ENCODE measurements at regions of chr12 and their contacts with region 1.

Region 1: DNA sequence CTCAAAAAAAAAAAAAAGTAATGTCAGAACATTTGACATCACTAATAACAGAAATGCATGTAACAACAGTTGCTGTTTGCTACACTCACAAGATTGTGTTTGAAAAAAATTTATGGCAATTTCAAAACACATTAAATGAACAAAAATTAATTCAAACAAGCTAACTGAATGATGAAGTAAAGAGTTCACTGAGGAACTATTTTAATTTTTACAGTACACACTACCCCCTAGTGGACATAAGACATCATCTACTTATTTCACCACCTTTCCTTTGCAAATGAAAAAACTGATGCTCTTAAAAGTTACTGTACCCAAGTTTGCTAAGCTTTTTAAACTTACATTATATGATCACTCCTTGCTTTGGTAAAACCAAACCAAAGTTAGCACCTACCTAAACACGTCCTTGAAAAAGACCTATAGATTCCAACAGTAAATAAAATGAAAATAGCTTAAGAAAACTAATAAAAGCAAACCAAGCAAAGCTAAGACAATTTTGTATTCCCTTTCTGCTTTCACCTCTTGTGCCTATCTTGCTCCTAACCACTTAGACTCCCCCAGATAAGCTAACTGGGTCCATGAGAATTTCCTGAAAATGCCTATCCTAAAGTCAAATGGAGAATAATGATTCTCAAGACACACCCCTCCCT is 22.2 kb downstream of the UBE2N start:
- DNase-seq: peak in 3 of 14 experiments; percentile 66 to 73 (median 72)
- ATAC-seq: peak; percentile 74
- H3K4me3 ChIP-seq: no peak overlapping the region
- H3K4me3 Mint-ChIP-seq: peak overlapping the region; percentile 5
- H3K27ac ChIP-seq: no peak overlapping the region
- H3K27ac Mint-ChIP-seq: peak overlapping the region; percentile 31
- H3K4me1 ChIP-seq: peaks cover 21% of the 10 kb centered on the region
- H3K4me1 Mint-ChIP-seq: peaks cover 91% of the 10 kb centered on the region
- H3K27me3 ChIP-seq: no peaks in the 10 kb centered on the region
- H3K27me3 Mint-ChIP-seq: no peaks in the 10 kb centered on the region
- CTCF ChIP-seq: peak; percentile 76

Region 2: DNA sequence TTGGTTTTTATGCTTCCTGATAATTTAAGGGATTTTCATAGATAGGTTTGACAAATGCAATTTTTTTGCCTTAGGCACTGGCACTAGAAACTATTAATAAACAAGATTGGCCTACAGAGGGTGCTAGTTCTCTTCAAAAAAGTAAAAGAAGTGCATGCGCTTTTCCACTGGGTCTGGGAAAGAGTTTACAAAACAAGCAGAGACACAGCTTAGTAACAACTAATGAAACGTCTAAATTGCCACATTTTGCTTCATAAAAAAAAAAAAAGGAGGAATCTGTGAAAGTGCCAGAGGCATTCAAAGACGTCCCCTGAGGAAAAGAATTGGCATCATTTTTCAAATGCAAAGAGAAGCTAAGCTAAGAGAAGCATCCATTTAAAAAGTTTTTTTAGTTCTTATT is 432.1 kb before region 1 on chr12:
- CTCF ChIA-PET with region 1: interaction called, 5 read pairs
- POLR2A ChIA-PET with region 1: no interaction called
- intact Hi-C with region 1: loop called (anchors 1 to 5 kb)
- DNase-seq: peak in 4 of 14 experiments; percentile 13 to 73 (median 70)
- ATAC-seq: peak; percentile 81
- H3K4me3 ChIP-seq: no peak overlapping the region
- H3K4me3 Mint-ChIP-seq: peak overlapping the region; percentile 26
- H3K27ac ChIP-seq: no peak overlapping the region
- H3K27ac Mint-ChIP-seq: no peak overlapping the region
- H3K4me1 ChIP-seq: peaks cover 7% of the 10 kb centered on the region
- H3K4me1 Mint-ChIP-seq: peaks cover 12% of the 10 kb centered on the region
- H3K27me3 ChIP-seq: no peaks in the 10 kb centered on the region
- H3K27me3 Mint-ChIP-seq: no peaks in the 10 kb centered on the region
- CTCF ChIP-seq: peak; percentile 80

Region 3: GRCh38 chr12:93098077-93098476 is 321.4 kb before region 1 on chr12:
- CTCF ChIA-PET with region 1: interaction called, 9 read pairs
- POLR2A ChIA-PET with region 1: no interaction called
- intact Hi-C with region 1: loop called in 1 of 2 experiments (anchors 5 kb)
- DNase-seq: peak; percentile 32 to 81 (median 60)
- ATAC-seq: peak; percentile 84
- H3K4me3 ChIP-seq: no peak overlapping the region
- H3K4me3 Mint-ChIP-seq: no peak overlapping the region
- H3K27ac ChIP-seq: no peak overlapping the region
- H3K27ac Mint-ChIP-seq: no peak overlapping the region
- H3K4me1 ChIP-seq: peaks cover 3% of the 10 kb centered on the region
- H3K4me1 Mint-ChIP-seq: peaks cover 5% of the 10 kb centered on the region
- H3K27me3 ChIP-seq: no peaks in the 10 kb centered on the region
- H3K27me3 Mint-ChIP-seq: peaks cover 6% of the 10 kb centered on the region
- CTCF ChIP-seq: peak; percentile 61

Region 4: DNA sequence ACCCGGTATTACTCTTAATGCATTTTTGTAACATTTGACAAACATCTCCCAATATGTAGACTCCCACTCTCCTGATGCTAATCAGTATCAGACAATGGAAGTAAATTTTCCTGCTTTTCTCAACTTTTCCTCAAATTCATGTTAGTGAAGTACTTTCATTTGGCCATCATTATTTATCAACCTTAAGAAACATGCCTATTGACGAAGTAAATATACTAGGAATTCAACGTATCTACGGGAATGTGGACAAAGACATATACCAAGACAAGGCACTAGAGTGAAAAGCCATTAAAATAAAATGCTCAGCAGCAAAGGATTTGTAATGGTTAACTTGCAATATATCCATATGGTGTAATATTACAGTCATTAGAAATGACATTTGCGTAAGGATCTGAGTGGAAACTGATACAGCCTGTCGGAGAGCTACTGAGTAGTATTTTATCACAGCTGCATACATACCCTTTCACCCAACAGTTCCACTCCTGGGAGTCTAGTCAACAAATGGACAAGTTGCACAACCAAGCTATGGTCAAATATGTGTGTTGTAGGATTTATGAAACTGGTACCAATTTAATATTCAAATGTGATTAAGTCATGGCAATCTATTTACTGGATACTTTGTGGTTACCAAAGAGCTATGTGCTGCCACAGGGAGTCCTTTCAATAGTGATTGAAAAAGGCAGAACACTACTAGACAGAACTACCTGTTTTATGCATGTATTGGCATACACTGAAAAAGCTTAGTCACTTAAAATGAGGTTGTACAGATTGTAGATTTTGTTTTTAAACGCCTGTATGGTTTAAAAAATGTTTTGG is 15.3 kb before region 1 on chr12:
- CTCF ChIA-PET with region 1: interaction called, 13 read pairs
- POLR2A ChIA-PET with region 1: interaction called, 3 read pairs
- intact Hi-C with region 1: no loop called
- DNase-seq: no peak
- ATAC-seq: no peak
- H3K4me3 ChIP-seq: no peak overlapping the region
- H3K4me3 Mint-ChIP-seq: no peak overlapping the region
- H3K27ac ChIP-seq: no peak overlapping the region
- H3K27ac Mint-ChIP-seq: peak overlapping the region; percentile 6
- H3K4me1 ChIP-seq: no peaks in the 10 kb centered on the region
- H3K4me1 Mint-ChIP-seq: peaks cover 5% of the 10 kb centered on the region
- H3K27me3 ChIP-seq: no peaks in the 10 kb centered on the region
- H3K27me3 Mint-ChIP-seq: no peaks in the 10 kb centered on the region
- CTCF ChIP-seq: no peak

Region 5: GRCh38 chr12:93434256-93434865 is 14.8 kb after region 1 on chr12:
- CTCF ChIA-PET with region 1: interaction called, 11 read pairs
- POLR2A ChIA-PET with region 1: interaction called, 16 read pairs
- intact Hi-C with region 1: no loop called
- DNase-seq: no peak
- ATAC-seq: no peak
- H3K4me3 ChIP-seq: no peak overlapping the region
- H3K4me3 Mint-ChIP-seq: peak overlapping the region; percentile 12
- H3K27ac ChIP-seq: no peak overlapping the region
- H3K27ac Mint-ChIP-seq: no peak overlapping the region
- H3K4me1 ChIP-seq: peaks cover 56% of the 10 kb centered on the region
- H3K4me1 Mint-ChIP-seq: peaks cover 88% of the 10 kb centered on the region
- H3K27me3 ChIP-seq: no peaks in the 10 kb centered on the region
- H3K27me3 Mint-ChIP-seq: no peaks in the 10 kb centered on the region
- CTCF ChIP-seq: no peak

Region 6: GRCh38 chr12:93441617-93442410 is 22.3 kb after region 1 on chr12 and contains the start of gene UBE2N:
- CTCF ChIA-PET with region 1: interaction called, 11 read pairs
- POLR2A ChIA-PET with region 1: interaction called, 18 read pairs
- intact Hi-C with region 1: no loop called
- DNase-seq: peak; percentile 92 to 98 (median 95)
- ATAC-seq: peak; percentile 81
- H3K4me3 ChIP-seq: peak within 1 kb of the TSS; percentile 76
- H3K4me3 Mint-ChIP-seq: peak within 1 kb of the TSS; percentile 96
- H3K27ac ChIP-seq: peak within 1 kb of the TSS; percentile 89 to 91
- H3K27ac Mint-ChIP-seq: peak within 1 kb of the TSS; percentile 93
- H3K4me1 ChIP-seq: peaks cover 29% of the 10 kb centered on the region
- H3K4me1 Mint-ChIP-seq: peaks cover 53% of the 10 kb centered on the region
- H3K27me3 ChIP-seq: no peaks in the 10 kb centered on the region
- H3K27me3 Mint-ChIP-seq: no peaks in the 10 kb centered on the region
- CTCF ChIP-seq: no peak
- total RNA-seq, gene UBE2N: 89.8 to 101 TPM

Region 7: DNA sequence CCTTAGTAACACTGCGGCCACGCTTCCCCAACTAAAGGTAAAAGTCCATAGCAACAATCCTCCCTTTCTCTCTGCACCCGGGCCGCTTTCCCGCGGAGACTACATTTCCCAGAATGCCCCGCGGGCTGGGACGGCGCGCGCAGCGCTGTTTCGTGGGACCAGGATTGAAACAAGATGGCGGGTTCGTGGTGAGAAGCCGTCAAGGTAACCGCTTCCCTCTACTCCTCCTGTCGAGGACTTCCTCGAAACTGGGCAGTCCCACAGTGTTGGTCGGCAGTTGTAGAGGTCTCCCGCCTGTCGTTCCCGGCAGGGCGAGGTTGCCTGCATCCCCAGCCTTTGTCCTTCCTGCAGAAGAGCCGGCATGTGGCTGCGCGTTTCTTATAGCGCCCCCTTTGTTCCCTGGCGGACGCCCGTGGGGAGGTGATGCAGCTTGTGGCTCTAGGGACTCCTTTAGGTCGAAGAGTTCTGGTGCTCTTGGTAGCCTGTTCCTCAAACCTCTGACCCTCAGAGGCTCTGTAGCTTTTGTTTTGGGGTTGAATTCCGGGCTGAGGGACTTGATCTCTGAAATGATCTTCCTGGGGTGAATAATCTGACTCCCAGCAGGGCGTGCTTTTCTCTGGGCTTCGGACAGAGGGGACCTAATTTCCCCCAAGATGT is 48.0 kb after region 1 on chr12 and contains the start of gene MRPL42:
- CTCF ChIA-PET with region 1: interaction called, 13 read pairs
- POLR2A ChIA-PET with region 1: interaction called, 5 read pairs
- intact Hi-C with region 1: no loop called
- DNase-seq: peak; percentile 84 to 94 (median 92)
- ATAC-seq: peak; percentile 95
- H3K4me3 ChIP-seq: peak within 1 kb of the TSS; percentile 92
- H3K4me3 Mint-ChIP-seq: peak within 1 kb of the TSS; percentile 92
- H3K27ac ChIP-seq: peak within 1 kb of the TSS; percentile 77 to 93
- H3K27ac Mint-ChIP-seq: peak within 1 kb of the TSS; percentile 95
- H3K4me1 ChIP-seq: peaks cover 25% of the 10 kb centered on the region
- H3K4me1 Mint-ChIP-seq: peaks cover 40% of the 10 kb centered on the region
- H3K27me3 ChIP-seq: no peaks in the 10 kb centered on the region
- H3K27me3 Mint-ChIP-seq: no peaks in the 10 kb centered on the region
- CTCF ChIP-seq: peak; percentile 82
- total RNA-seq, gene MRPL42: 39.0 to 39.3 TPM